ENCODE measurements at regions of chr1 and their contacts with region 1.

Region 1: GRCh38 chr1:116485071-116485735 is 85.6 kb downstream of the CD58 start:
- DNase-seq: no peak
- ATAC-seq: peak; percentile 99
- H3K4me3 ChIP-seq: no peak overlapping the region
- H3K27ac ChIP-seq: no peak overlapping the region
- H3K4me1 ChIP-seq: peaks cover 10% of the 10 kb centered on the region
- H3K27me3 ChIP-seq: no peaks in the 10 kb centered on the region
- CTCF ChIP-seq: peak; percentile 89 to 97 (median 90); a peak in 5 of 6 replicates
- EP300 ChIP-seq: no peak
- POLR2A ChIP-seq: no peak
- RAD21 ChIP-seq: peak; percentile 95

Region 2: GRCh38 chr1:116133696-116134650 is 351.2 kb before region 1 on chr1:
- CTCF ChIA-PET with region 1: interaction called, 239 read pairs
- POLR2A ChIA-PET with region 1: interaction called, 7 read pairs
- RAD21 ChIA-PET with region 1: interaction called, 147 read pairs
- SMC1A ChIA-PET with region 1: interaction called, 161 read pairs
- in situ Hi-C with region 1: loop called (anchors 5 kb)
- intact Hi-C with region 1: loop called (anchors 1 kb)
- DNase-seq: no peak
- ATAC-seq: no peak
- H3K4me3 ChIP-seq: no peak overlapping the region
- H3K27ac ChIP-seq: no peak overlapping the region
- H3K4me1 ChIP-seq: peaks cover 2% of the 10 kb centered on the region; the same call in 1 of the 2 replicates
- H3K27me3 ChIP-seq: no peaks in the 10 kb centered on the region
- CTCF ChIP-seq: peak; percentile 14 to 23 (median 22); a peak in 4 of 6 replicates
- EP300 ChIP-seq: no peak
- POLR2A ChIP-seq: no peak
- RAD21 ChIP-seq: peak; percentile 21; the same call in 1 of the 2 replicates

Region 3: GRCh38 chr1:116159177-116159576 is 326.0 kb before region 1 on chr1:
- CTCF ChIA-PET with region 1: interaction called, 26 read pairs
- POLR2A ChIA-PET with region 1: no interaction called
- RAD21 ChIA-PET with region 1: interaction called, 6 read pairs
- SMC1A ChIA-PET with region 1: interaction called, 74 read pairs
- in situ Hi-C with region 1: no loop called
- intact Hi-C with region 1: no loop called
- DNase-seq: no peak
- ATAC-seq: no peak
- H3K4me3 ChIP-seq: no peak overlapping the region
- H3K27ac ChIP-seq: no peak overlapping the region
- H3K4me1 ChIP-seq: no peaks in the 10 kb centered on the region
- H3K27me3 ChIP-seq: no peaks in the 10 kb centered on the region; a peak in 2 of 4 replicates
- CTCF ChIP-seq: no peak
- EP300 ChIP-seq: no peak
- POLR2A ChIP-seq: no peak
- RAD21 ChIP-seq: no peak

Region 4: DNA sequence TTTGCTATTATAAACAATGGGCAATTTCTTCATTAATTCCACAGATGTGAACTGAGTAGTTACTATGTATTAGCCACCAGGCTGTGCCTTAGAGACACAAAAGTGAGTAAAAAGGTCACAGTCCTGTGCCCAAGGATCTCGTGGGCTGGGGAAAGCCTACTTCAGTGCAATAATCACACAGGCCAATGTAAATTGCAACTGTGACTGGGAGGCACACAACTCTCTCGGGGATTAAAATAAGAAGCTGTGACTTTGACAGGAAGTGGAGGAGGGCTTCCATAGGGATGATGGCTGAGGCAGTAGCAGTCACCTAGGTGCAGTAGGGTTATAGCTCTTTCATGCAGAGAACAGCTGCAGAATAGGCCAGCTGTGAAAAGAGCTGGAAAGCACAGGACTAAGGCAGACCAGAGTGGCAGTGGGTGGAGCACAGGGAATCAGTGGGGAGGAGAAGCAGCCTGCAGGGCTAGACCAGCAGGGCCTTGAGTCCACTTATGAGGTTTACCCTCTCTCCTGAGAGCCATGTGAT is 252.2 kb before region 1 on chr1:
- CTCF ChIA-PET with region 1: interaction called, 25 read pairs
- POLR2A ChIA-PET with region 1: no interaction called
- RAD21 ChIA-PET with region 1: interaction called, 18 read pairs
- SMC1A ChIA-PET with region 1: interaction called, 20 read pairs
- in situ Hi-C with region 1: no loop called
- intact Hi-C with region 1: loop called (anchors 5 kb)
- DNase-seq: peak; percentile 9
- ATAC-seq: peak; percentile 88
- H3K4me3 ChIP-seq: no peak overlapping the region
- H3K27ac ChIP-seq: no peak overlapping the region
- H3K4me1 ChIP-seq: no peaks in the 10 kb centered on the region; the same call in 1 of the 2 replicates
- H3K27me3 ChIP-seq: no peaks in the 10 kb centered on the region
- CTCF ChIP-seq: peak; percentile 10 to 52 (median 17); a peak in 2 of 6 replicates
- EP300 ChIP-seq: no peak
- POLR2A ChIP-seq: no peak
- RAD21 ChIP-seq: peak; percentile 54

Region 5: GRCh38 chr1:116377541-116378529 is 107.4 kb before region 1 on chr1:
- CTCF ChIA-PET with region 1: interaction called, 22 read pairs
- POLR2A ChIA-PET with region 1: no interaction called
- RAD21 ChIA-PET with region 1: interaction called, 16 read pairs
- SMC1A ChIA-PET with region 1: interaction called, 13 read pairs
- in situ Hi-C with region 1: no loop called
- intact Hi-C with region 1: no loop called
- DNase-seq: peak; percentile 96
- ATAC-seq: peak; percentile 60
- H3K4me3 ChIP-seq: peak overlapping the region; percentile 95
- H3K27ac ChIP-seq: peak overlapping the region; percentile 96
- H3K4me1 ChIP-seq: peaks cover 38% of the 10 kb centered on the region
- H3K27me3 ChIP-seq: no peaks in the 10 kb centered on the region
- CTCF ChIP-seq: no peak
- EP300 ChIP-seq: peak; percentile 84 to 92
- POLR2A ChIP-seq: peak; percentile 56
- RAD21 ChIP-seq: no peak

Region 6: GRCh38 chr1:116474921-116475849 is 10.0 kb before region 1 on chr1:
- CTCF ChIA-PET with region 1: interaction called, 32 read pairs
- POLR2A ChIA-PET with region 1: no interaction called
- RAD21 ChIA-PET with region 1: interaction called, 4 read pairs
- SMC1A ChIA-PET with region 1: interaction called, 5 read pairs
- in situ Hi-C with region 1: no loop called
- intact Hi-C with region 1: no loop called
- DNase-seq: no peak
- ATAC-seq: no peak
- H3K4me3 ChIP-seq: no peak overlapping the region
- H3K27ac ChIP-seq: no peak overlapping the region
- H3K4me1 ChIP-seq: no peaks in the 10 kb centered on the region
- H3K27me3 ChIP-seq: no peaks in the 10 kb centered on the region
- CTCF ChIP-seq: no peak
- EP300 ChIP-seq: no peak
- POLR2A ChIP-seq: no peak
- RAD21 ChIP-seq: no peak

Region 7: GRCh38 chr1:116514708-116515525 is 29.7 kb after region 1 on chr1:
- CTCF ChIA-PET with region 1: interaction called, 16 read pairs
- POLR2A ChIA-PET with region 1: no interaction called
- RAD21 ChIA-PET with region 1: interaction called, 3 read pairs
- SMC1A ChIA-PET with region 1: interaction called, 6 read pairs
- in situ Hi-C with region 1: no loop called
- intact Hi-C with region 1: no loop called
- DNase-seq: peak; percentile 88
- ATAC-seq: peak; percentile 88
- H3K4me3 ChIP-seq: no peak overlapping the region
- H3K27ac ChIP-seq: peak overlapping the region; percentile 85
- H3K4me1 ChIP-seq: peaks cover 52% of the 10 kb centered on the region
- H3K27me3 ChIP-seq: no peaks in the 10 kb centered on the region
- CTCF ChIP-seq: no peak
- EP300 ChIP-seq: peak in 1 of 2 experiments; percentile 57; a peak in 3 of 4 replicates
- POLR2A ChIP-seq: no peak
- RAD21 ChIP-seq: no peak; the same call in 1 of the 2 replicates